Naive thymus-derived CD4-positive, alpha-beta T cell (primary cell): ENCODE measurements at regions of chr9 and their contacts with region 1.

Region 1: DNA sequence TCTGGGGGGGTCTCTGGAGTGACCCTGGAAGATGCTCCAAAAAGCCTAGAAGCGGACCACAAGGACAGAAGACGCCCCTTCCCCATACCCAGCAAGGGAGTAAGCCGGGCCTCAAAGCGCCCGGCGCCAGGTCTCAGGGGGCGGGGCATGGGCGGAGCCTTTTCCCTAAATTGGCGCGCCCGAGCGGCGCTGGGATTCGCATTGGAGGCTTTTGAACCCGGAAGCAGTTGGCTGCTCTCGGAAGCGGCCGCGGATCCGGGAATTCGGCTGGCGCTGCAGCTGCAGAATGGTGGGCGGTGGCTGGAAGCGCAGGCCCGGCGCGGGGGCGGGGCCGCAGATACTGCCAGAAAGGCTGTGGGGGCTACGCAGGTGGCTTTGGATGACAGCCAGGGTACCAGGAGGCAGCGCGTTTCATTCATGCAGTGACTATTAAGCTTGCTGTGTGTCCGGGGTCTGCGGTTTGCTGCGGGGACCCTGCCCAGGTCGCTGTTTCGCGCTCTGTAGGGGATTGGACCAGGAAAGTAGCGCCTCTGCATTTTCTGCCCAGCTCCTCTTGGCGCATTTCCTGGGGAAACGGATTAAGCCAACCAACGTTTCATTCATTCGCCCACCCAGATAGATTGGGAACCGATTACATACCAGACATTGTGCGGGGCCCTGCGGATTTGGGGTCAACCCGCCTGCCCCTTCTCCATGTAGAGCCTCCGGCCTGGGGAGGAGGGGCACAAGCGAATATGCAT is 83.0 kb upstream of the FREM1 start:
- DNase-seq: peak; percentile 9 to 50 (median 27)
- ATAC-seq: peak; percentile 45
- H3K4me3 ChIP-seq: peak overlapping the region; percentile 70
- H3K4me3 Mint-ChIP-seq: peak overlapping the region; percentile 79 to 92 (median 86)
- H3K27ac ChIP-seq: peak overlapping the region; percentile 61
- H3K27ac Mint-ChIP-seq: peak overlapping the region; percentile 75 to 94 (median 84)
- H3K4me1 ChIP-seq: peaks cover 14 to 18% of the 10 kb centered on the region in 2 donors
- H3K4me1 Mint-ChIP-seq: peaks cover 31 to 44% (median 40%) of the 10 kb centered on the region in 7 donors
- H3K27me3 ChIP-seq: no peaks in the 10 kb centered on the region
- H3K27me3 Mint-ChIP-seq: peaks cover 0 to 3% (median 0%) of the 10 kb centered on the region in 5 donors

Region 2: GRCh38 chr9:14958989-14959388 is 34.2 kb before region 1 on chr9:
- CTCF ChIA-PET with region 1: no interaction called
- POLR2A ChIA-PET with region 1: no interaction called
- intact Hi-C with region 1: loop called in 1 of 2 experiments (anchors 2 kb)
- DNase-seq: no peak
- ATAC-seq: no peak
- H3K4me3 ChIP-seq: no peak overlapping the region
- H3K4me3 Mint-ChIP-seq: peak overlapping the region in 1 of 10 donors; percentile 6
- H3K27ac ChIP-seq: no peak overlapping the region
- H3K27ac Mint-ChIP-seq: peak overlapping the region in 1 of 9 donors; percentile 52
- H3K4me1 ChIP-seq: no peaks in the 10 kb centered on the region
- H3K4me1 Mint-ChIP-seq: peaks cover 4 to 45% (median 17%) of the 10 kb centered on the region in 7 donors
- H3K27me3 ChIP-seq: no peaks in the 10 kb centered on the region
- H3K27me3 Mint-ChIP-seq: peaks cover 0 to 2% (median 0%) of the 10 kb centered on the region in 5 donors